Ascending aorta (tissue), 2 donors: ENCODE measurements at regions of chr15 and their contacts with region 1.

Region 1: GRCh38 chr15:67024314-67024997 is 40.9 kb upstream of the SMAD3 start:
- DNase-seq: peak; percentile 55 to 93
- H3K4me3 ChIP-seq: no peak overlapping the region
- H3K27ac ChIP-seq: peak overlapping the region; percentile 55 to 60
- H3K4me1 ChIP-seq: peaks cover 14 to 27% of the 10 kb centered on the region in 2 donors
- H3K27me3 ChIP-seq: no peaks in the 10 kb centered on the region
- CTCF ChIP-seq: no peak

Region 2: DNA sequence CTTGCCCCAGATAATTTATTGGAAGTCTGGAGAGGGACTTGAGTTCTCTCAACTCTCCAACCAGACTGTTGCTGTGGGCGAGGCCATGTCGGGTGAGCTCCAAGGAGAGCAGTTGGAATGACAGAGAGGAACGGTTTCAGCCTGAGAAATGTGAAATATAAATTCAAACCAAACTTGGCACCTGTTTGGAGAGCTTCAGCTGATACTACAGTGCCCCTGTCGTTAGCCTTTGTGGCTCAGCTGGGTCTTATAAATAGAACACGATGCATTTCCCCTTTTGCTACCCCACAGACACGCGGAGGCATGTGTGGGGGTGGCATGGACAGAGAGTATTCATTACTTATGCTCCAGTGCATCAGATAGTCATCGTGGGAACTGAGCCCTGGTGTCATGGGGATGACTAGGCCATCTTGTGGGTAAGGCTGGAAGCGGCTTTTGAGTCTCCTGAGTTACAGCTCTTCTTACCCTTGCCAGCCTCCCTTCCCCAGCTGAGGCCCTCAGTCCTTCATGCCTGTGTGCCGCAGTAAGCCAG is 56.5 kb after region 1 on chr15:
- intact Hi-C with region 1: loop called (anchors 2 kb)
- DNase-seq: peak; percentile 39 to 83
- H3K4me3 ChIP-seq: peak overlapping the region in 1 of 2 donors; percentile 40
- H3K27ac ChIP-seq: peak overlapping the region; percentile 65 to 67
- H3K4me1 ChIP-seq: peaks cover 23 to 68% of the 10 kb centered on the region in 2 donors
- H3K27me3 ChIP-seq: no peaks in the 10 kb centered on the region
- CTCF ChIP-seq: no peak